ENCODE measurements at regions of chr4 and their contacts with region 1.

Region 1: GRCh38 chr4:184168406-184169019 is 49.2 kb downstream of the ENPP6 start:
- DNase-seq: peak; percentile 58 to 98 (median 80)

Region 2: DNA sequence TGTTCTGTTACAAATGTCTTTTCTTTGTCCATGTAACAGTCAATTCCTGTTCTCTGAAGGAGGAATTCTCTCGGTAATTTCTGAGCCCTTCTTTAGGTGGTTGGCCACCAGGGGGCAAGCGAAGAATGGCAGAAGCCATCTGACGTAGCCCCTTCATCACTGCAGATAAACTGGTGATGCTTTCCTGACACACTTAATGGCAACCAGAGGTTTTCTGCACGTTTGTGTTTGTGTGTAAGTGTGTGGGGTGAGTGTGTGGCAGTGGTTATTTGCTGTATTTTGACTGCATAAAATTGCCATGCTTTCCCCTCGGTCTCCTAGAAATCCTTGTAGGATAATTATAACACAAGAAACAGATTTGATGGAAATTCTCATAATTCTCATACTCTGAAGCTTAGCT is 328.2 kb before region 1 on chr4:
- intact Hi-C with region 1: loop called (anchors 1 kb)
- DNase-seq: peak; percentile 67 to 97 (median 92)

Region 3: DNA sequence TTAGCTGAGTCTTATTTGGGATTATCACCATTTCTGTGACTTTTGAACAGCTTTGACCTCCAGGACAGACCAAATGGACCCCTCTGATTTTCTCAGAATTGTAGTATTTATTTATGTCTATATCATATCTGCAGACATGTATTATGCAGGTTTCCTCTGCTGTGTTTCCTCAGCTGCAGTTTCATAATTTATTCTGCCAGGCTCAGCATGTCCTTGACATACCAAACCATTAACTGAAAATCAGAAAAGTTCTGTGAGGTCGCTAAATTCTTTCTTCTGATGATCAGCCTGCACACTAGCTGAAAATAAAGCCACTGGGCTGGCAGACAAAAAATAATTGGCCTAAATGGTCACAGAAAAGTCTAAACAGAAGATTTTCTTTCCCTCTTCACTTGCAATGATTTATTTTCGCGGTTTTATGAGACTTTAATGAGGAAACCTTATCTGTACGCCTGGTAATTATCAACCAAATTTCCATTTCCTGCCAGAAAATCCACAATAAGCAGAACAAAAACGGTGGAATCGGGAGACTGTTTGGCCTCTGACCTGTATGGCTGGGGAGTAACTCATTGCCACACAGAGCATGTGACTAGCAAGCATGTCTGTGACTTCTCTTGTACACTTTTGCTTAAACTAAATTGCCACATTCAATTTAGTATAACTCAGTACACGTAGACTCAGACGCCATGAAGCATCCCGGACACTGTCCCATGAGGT is 101.8 kb before region 1 on chr4:
- intact Hi-C with region 1: no loop called
- DNase-seq: no peak

Region 4: GRCh38 chr4:184100297-184100885 is 68.1 kb before region 1 on chr4:
- intact Hi-C with region 1: loop called (anchors 5 kb)
- DNase-seq: peak in 5 of 10 donors; percentile 39 to 90 (median 53)

Region 5: DNA sequence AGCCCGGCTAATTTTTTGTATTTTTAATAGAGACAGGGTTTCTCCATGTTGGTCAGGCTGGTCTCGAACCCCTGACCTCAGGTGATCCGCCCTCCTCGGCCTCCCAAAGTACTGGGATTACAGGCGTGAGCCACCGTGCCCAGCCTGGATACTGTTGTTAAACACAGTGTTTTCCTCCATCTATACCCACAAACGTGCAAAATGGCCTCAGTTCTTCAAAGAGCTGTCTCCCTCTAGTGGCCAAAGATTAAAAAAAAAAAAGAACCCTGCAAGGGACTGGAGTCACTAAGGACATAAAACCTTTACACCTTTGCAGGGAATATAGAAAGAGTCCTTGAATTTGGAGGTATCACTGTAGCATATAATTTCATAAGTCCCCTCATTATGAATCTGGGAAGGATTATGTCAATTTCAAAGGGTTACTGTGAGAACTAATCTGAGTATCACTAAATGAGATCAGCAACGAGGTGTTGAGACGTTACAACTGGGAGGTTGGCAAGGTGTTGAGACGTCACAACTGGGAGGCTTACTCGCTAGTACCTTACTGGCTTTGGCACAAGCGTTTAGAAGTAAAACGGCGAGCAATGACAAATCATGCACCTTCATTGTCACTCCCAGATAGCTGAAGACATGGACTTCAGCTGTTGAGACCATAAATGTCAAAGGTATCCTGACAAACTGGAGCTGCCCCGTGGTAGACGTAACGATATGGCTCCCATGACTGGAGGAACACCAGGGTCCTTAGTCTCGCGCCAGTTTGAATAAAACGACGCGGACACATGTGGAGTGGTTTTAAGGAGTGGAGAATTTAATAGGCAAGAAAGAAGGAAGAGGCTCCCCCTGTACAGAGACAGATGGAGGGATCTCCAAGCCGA is 82.5 kb after region 1 on chr4:
- intact Hi-C with region 1: loop called (anchors 2 kb)
- DNase-seq: no peak

Measured in posterior cingulate gyrus (tissue), 11 donors.